ENCODE measurements at regions of chr2 and their contacts with region 1.

Region 1: GRCh38 chr2:98108110-98108509 is 21.1 kb downstream of the VWA3B start:
- DNase-seq: no peak
- H3K4me3 ChIP-seq: no peak overlapping the region
- H3K27ac ChIP-seq: no peak overlapping the region
- H3K4me1 ChIP-seq: no peaks in the 10 kb centered on the region
- H3K27me3 ChIP-seq: no peaks in the 10 kb centered on the region
- CTCF ChIP-seq: no peak
- EP300 ChIP-seq: no peak
- POLR2A ChIP-seq: no peak

Region 2: GRCh38 chr2:98058321-98058975 is 49.7 kb before region 1 on chr2:
- intact Hi-C with region 1: no loop called
- DNase-seq: no peak
- H3K4me3 ChIP-seq: no peak overlapping the region
- H3K27ac ChIP-seq: no peak overlapping the region
- H3K4me1 ChIP-seq: no peaks in the 10 kb centered on the region
- H3K27me3 ChIP-seq: no peaks in the 10 kb centered on the region
- CTCF ChIP-seq: no peak
- EP300 ChIP-seq: no peak
- POLR2A ChIP-seq: no peak

Region 3: GRCh38 chr2:98514879-98515249 is 406.8 kb after region 1 on chr2:
- intact Hi-C with region 1: loop called in 1 of 4 experiments (anchors 5 kb)
- DNase-seq: no peak
- H3K4me3 ChIP-seq: no peak overlapping the region
- H3K27ac ChIP-seq: peak overlapping the region in 1 of 2 donors; percentile 35
- H3K4me1 ChIP-seq: peaks cover 10% of the 10 kb centered on the region
- H3K27me3 ChIP-seq: no peaks in the 10 kb centered on the region
- CTCF ChIP-seq: no peak
- EP300 ChIP-seq: no peak
- POLR2A ChIP-seq: no peak

Measured in ovary (tissue), 10 donors.